ENCODE measurements at regions of chr1 and their contacts with region 1.

Region 1: GRCh38 chr1:111507411-111508201 is 4.2 kb upstream of the ADORA3 start:
- DNase-seq: peak; percentile 61 to 72
- ATAC-seq: peak; percentile 68 to 84 (median 72)
- H3K4me3 ChIP-seq: peak overlapping the region; percentile 26
- H3K4me3 Mint-ChIP-seq: peak overlapping the region; percentile 80
- H3K27ac ChIP-seq: peak overlapping the region; percentile 92
- H3K27ac Mint-ChIP-seq: peak overlapping the region in 1 of 2 donors; percentile 87
- H3K4me1 ChIP-seq: peaks cover 61% of the 10 kb centered on the region
- H3K4me1 Mint-ChIP-seq: peaks cover 23 to 44% of the 10 kb centered on the region in 2 donors
- H3K27me3 ChIP-seq: no peaks in the 10 kb centered on the region
- H3K27me3 Mint-ChIP-seq: no peaks in the 10 kb centered on the region
- CTCF ChIP-seq: no peak

Region 2: DNA sequence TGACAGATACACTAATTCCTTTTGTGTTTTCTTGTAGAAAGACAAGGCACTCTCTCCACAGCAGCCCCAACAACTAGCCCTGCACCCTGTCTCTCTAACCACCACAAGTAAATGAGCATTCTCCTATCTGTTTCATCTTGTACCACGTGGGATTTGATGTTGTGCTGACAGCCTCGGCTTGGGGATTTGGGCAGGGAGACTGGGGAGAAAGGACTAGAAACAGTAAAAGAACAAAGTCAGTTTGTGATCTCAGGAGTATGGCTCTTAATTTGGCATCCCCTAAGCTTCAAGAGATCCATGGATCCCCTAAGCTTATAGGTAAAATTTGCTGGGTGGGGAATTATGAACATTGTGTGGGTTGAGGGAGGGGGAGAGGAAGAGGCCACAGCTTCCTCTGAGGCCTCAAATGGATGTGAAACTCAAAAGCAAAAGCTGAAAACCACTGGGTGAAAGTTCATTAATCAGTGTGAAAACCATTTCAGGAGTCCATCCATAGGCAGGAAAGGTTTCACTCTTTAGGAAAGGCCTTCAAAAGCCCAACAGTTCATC is 30.8 kb before region 1 on chr1:
- intact Hi-C with region 1: loop called (anchors 2 kb)
- DNase-seq: peak in 1 of 2 donors; percentile 74
- ATAC-seq: peak; percentile 14 to 60 (median 52)
- H3K4me3 ChIP-seq: peak overlapping the region; percentile 60
- H3K4me3 Mint-ChIP-seq: peak overlapping the region; percentile 97
- H3K27ac ChIP-seq: peak overlapping the region; percentile 69
- H3K27ac Mint-ChIP-seq: no peak overlapping the region
- H3K4me1 ChIP-seq: peaks cover 45% of the 10 kb centered on the region
- H3K4me1 Mint-ChIP-seq: peaks cover 36 to 48% of the 10 kb centered on the region in 2 donors
- H3K27me3 ChIP-seq: no peaks in the 10 kb centered on the region
- H3K27me3 Mint-ChIP-seq: no peaks in the 10 kb centered on the region
- CTCF ChIP-seq: no peak

Region 3: GRCh38 chr1:111592389-111593361 is 85.1 kb after region 1 on chr1:
- intact Hi-C with region 1: loop called (anchors 1 kb)
- DNase-seq: peak; percentile 75 to 91
- ATAC-seq: peak; percentile 85 to 92 (median 92)
- H3K4me3 ChIP-seq: no peak overlapping the region
- H3K4me3 Mint-ChIP-seq: peak overlapping the region; percentile 77
- H3K27ac ChIP-seq: peak overlapping the region; percentile 86
- H3K27ac Mint-ChIP-seq: peak overlapping the region; percentile 78 to 89
- H3K4me1 ChIP-seq: peaks cover 54% of the 10 kb centered on the region
- H3K4me1 Mint-ChIP-seq: peaks cover 54% of the 10 kb centered on the region in 2 donors
- H3K27me3 ChIP-seq: no peaks in the 10 kb centered on the region
- H3K27me3 Mint-ChIP-seq: no peaks in the 10 kb centered on the region
- CTCF ChIP-seq: no peak

Region 4: DNA sequence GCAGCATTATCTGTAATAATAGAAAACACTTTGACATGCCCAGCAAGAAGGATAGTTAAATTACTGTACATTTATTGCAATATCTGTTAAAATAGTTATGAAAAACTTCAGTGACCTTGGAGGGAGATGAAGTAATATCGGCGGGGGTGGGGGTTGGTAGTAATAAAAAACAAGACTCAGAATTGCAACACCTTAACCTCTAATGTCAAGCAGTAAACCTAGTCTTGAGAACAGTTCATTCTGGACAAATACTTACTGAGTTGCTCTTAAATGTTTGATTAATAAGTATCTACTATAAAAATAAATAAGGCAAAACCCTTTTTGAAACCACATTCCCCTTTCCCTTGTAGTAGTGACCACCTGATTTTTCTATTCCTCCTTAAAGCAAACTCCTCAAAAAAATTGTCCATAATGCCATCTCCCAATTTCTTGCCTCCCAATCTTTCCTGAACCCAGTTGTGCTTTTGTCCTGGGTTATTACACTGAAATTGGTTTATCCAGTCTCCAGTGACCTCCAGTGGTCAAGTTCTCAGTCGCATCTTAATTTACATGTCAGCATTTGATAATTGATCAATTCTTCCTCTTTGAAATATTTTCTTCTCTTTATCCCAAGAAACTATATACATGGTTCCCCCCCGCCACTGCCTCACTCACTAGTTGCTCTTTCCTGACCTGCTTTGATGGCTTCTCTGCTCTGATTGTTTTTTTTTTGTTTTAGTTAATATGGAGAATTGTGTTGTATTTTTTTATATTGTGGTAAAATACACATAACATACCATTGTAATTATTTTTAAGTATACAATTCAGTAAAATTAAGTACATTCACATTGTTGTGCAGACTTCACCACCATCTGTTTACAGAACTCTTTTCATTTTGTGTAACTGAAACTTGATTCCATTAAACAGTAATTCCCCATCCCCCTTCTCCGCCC is 148.7 kb after region 1 on chr1:
- intact Hi-C with region 1: loop called (anchors 1 kb)
- DNase-seq: peak in 1 of 2 donors; percentile 72
- ATAC-seq: peak in 2 of 3 donors; percentile 36 to 50
- H3K4me3 ChIP-seq: no peak overlapping the region
- H3K4me3 Mint-ChIP-seq: no peak overlapping the region
- H3K27ac ChIP-seq: no peak overlapping the region
- H3K27ac Mint-ChIP-seq: peak overlapping the region; percentile 24 to 65
- H3K4me1 ChIP-seq: peaks cover 9% of the 10 kb centered on the region
- H3K4me1 Mint-ChIP-seq: peaks cover 31 to 44% of the 10 kb centered on the region in 2 donors
- H3K27me3 ChIP-seq: no peaks in the 10 kb centered on the region
- H3K27me3 Mint-ChIP-seq: no peaks in the 10 kb centered on the region
- CTCF ChIP-seq: peak; percentile 60

Region 5: GRCh38 chr1:111769517-111770146 is 262.0 kb after region 1 on chr1:
- intact Hi-C with region 1: loop called (anchors 1 kb)
- DNase-seq: peak in 1 of 2 donors; percentile 86
- ATAC-seq: peak; percentile 73 to 78 (median 78)
- H3K4me3 ChIP-seq: no peak overlapping the region
- H3K4me3 Mint-ChIP-seq: no peak overlapping the region
- H3K27ac ChIP-seq: no peak overlapping the region
- H3K27ac Mint-ChIP-seq: no peak overlapping the region
- H3K4me1 ChIP-seq: no peaks in the 10 kb centered on the region
- H3K4me1 Mint-ChIP-seq: no peaks in the 10 kb centered on the region
- H3K27me3 ChIP-seq: no peaks in the 10 kb centered on the region
- H3K27me3 Mint-ChIP-seq: no peaks in the 10 kb centered on the region
- CTCF ChIP-seq: peak; percentile 89

Measured in natural killer cell (primary cell).